ENCODE measurements at regions of chr16 and their contacts with region 1.

Region 1: DNA sequence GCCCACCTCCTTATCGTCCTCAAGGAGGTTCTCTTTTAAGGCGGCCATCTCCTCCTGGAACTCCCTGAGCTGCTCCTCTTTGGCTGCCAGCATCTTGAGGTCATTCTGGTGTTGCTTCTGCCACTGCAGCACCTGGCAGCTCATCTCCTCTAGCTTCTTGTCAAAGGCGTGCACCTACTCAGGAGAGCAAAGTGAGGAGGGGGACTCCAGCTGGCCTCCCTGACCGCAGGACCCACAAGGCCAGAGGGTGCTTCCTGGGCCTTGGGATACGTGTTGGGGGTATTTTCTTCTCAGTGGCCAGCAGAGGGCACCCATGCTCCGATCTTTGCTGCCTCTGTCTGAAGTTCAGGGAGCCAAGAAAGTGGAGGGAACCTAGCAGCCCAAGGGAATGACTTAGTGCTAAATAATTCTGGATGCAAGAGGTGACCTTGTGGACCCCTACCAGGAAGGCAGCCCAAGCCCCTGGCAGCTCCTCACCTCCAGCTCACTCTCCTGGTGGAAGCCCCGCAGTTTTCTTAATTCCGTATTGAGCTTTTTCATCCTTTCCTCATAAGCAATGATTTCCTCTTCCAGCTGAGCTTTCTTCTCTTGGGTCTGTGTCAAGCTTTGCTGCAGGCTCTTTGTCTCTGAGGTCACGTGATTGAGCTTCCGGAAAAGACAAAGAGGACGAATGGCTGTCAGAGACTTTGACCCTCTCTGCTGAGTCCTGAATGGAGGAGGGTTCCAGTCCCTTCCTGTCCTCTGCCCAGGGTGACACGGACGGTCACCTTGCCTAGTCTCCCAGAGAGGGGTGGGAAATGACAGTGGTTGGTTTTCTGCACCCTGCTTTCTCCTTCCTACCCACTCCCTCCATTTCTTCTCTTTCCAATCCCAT is 31.4 kb downstream of the DHX38 start:
- H3K4me3 Mint-ChIP-seq: peak overlapping the region; percentile 39
- H3K27ac Mint-ChIP-seq: peak overlapping the region; percentile 94
- H3K4me1 Mint-ChIP-seq: peaks cover 57% of the 10 kb centered on the region
- H3K27me3 Mint-ChIP-seq: no peaks in the 10 kb centered on the region

Region 2: GRCh38 chr16:72172105-72173034 is 47.4 kb after region 1 on chr16 and contains the start of gene PMFBP1:
- intact Hi-C with region 1: loop called (anchors 1 kb)
- H3K4me3 Mint-ChIP-seq: no peak within 1 kb of the TSS
- H3K27ac Mint-ChIP-seq: peak within 1 kb of the TSS; percentile 49
- H3K4me1 Mint-ChIP-seq: peaks cover 61% of the 10 kb centered on the region
- H3K27me3 Mint-ChIP-seq: no peaks in the 10 kb centered on the region

Region 3: GRCh38 chr16:72203401-72203800 is 78.4 kb after region 1 on chr16:
- intact Hi-C with region 1: loop called (anchors 1 kb)
- H3K4me3 Mint-ChIP-seq: peak overlapping the region; percentile 52
- H3K27ac Mint-ChIP-seq: peak overlapping the region; percentile 99
- H3K4me1 Mint-ChIP-seq: peaks cover 69% of the 10 kb centered on the region
- H3K27me3 Mint-ChIP-seq: no peaks in the 10 kb centered on the region

Region 4: GRCh38 chr16:72234387-72234786 is 109.4 kb after region 1 on chr16:
- intact Hi-C with region 1: loop called (anchors 10 kb)
- H3K4me3 Mint-ChIP-seq: no peak overlapping the region
- H3K27ac Mint-ChIP-seq: no peak overlapping the region
- H3K4me1 Mint-ChIP-seq: peaks cover 10% of the 10 kb centered on the region
- H3K27me3 Mint-ChIP-seq: no peaks in the 10 kb centered on the region

Region 5: DNA sequence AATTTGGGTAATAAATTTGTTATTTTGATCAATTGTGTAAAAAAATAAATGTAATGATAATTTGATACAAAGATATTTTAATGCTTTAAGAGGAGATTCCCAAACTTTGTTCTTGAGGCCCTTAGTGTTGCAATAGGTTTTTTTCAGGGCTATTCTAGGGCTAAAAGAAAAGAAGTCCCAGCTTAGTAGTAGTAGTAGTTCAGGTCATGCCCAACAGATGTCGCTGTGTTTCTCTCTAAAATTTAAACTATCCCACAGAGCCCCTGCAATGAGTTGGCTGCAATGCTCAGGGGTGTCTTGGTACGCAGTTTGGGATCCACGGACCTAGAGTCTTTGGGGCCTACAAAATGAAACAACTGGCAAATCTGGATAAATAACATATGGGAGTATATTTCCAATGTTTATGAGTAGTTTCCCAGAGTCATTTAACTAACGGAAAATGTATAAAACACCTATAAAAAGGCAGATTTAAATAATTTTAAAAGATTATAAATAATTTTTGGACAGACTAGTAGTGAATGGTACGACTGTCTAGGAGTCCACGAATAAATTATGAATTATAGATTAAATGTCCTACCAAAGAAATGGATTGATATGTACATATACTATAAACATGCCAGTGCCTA is 275.4 kb after region 1 on chr16:
- intact Hi-C with region 1: loop called (anchors 10 kb)
- H3K4me3 Mint-ChIP-seq: no peak overlapping the region
- H3K27ac Mint-ChIP-seq: peak overlapping the region; percentile 38
- H3K4me1 Mint-ChIP-seq: peaks cover 6% of the 10 kb centered on the region
- H3K27me3 Mint-ChIP-seq: no peaks in the 10 kb centered on the region

Region 6: GRCh38 chr16:72467157-72467759 is 342.3 kb after region 1 on chr16:
- intact Hi-C with region 1: loop called (anchors 1 kb)
- H3K4me3 Mint-ChIP-seq: no peak overlapping the region
- H3K27ac Mint-ChIP-seq: no peak overlapping the region
- H3K4me1 Mint-ChIP-seq: no peaks in the 10 kb centered on the region
- H3K27me3 Mint-ChIP-seq: no peaks in the 10 kb centered on the region